Esophagus squamous epithelium (tissue), 5 donors: ENCODE measurements at regions of chr4 and their contacts with region 1.

Region 1: GRCh38 chr4:39873823-39874222 is 103.9 kb downstream of the PDS5A start:
- DNase-seq: no peak
- H3K4me3 ChIP-seq: no peak overlapping the region
- H3K27ac ChIP-seq: no peak overlapping the region
- H3K4me1 ChIP-seq: no peaks in the 10 kb centered on the region
- H3K27me3 ChIP-seq: no peaks in the 10 kb centered on the region
- CTCF ChIP-seq: no peak
- POLR2A ChIP-seq: no peak

Region 2: DNA sequence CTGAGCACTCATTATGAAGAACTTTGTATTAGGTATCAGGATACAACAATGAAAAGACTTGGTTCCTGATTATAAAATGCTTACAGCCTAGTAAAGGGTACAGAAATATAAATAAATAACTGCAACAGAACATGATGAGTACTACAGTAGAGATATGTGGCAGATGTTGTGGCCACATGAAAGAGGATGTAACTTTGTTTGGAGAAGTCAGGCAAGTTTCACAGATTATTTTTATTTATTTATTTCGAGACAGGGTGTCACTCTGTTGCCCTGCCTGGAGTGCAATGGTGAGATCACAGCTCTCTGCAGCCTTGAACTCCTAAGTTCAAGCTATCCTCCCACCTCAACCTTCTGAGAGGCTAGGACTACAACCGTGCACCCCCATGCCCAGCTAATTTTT is 191.7 kb before region 1 on chr4:
- intact Hi-C with region 1: no loop called
- DNase-seq: no peak
- H3K4me3 ChIP-seq: no peak overlapping the region
- H3K27ac ChIP-seq: no peak overlapping the region
- H3K4me1 ChIP-seq: no peaks in the 10 kb centered on the region
- H3K27me3 ChIP-seq: no peaks in the 10 kb centered on the region
- CTCF ChIP-seq: no peak
- POLR2A ChIP-seq: no peak

Region 3: DNA sequence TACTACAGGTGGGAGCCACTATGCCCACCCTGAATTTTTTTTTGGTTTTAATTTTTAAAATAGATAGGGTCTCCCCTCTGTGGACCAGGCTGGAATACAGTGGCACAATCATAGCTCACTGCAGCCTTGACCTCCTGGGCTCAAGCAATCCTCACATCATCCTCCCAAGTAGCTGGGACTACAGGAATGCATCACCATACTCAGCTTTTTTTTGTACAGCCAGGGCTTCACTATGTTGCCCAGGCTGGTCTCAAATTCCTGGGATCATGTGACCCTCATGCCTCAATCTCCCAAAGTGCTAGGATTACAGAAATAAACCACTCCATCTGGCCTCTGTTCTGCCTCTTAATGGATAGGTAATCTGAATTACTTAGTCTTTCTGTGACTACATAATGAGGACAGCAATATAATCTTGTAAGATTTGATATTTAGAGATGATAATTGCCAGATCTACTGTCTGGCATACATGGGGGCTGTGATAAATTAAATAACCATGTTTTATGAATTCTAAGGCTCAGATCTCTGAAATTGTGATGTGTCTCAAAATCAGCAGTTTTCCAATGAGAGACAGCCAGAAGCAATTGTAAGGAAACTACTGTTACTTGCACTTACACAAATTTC is 77.1 kb after region 1 on chr4:
- intact Hi-C with region 1: loop called (anchors 10 kb)
- DNase-seq: no peak
- H3K4me3 ChIP-seq: no peak overlapping the region
- H3K27ac ChIP-seq: no peak overlapping the region
- H3K4me1 ChIP-seq: peaks cover 0 to 16% (median 10%) of the 10 kb centered on the region in 3 donors
- H3K27me3 ChIP-seq: no peaks in the 10 kb centered on the region
- CTCF ChIP-seq: no peak
- POLR2A ChIP-seq: no peak